ENCODE measurements at regions of chr12 and their contacts with region 1.

Region 1: GRCh38 chr12:50016501-50017475 is 8.5 kb downstream of the RACGAP1 start:
- DNase-seq: peak; percentile 68
- H3K4me3 ChIP-seq: no peak overlapping the region
- H3K27me3 ChIP-seq: no peaks in the 10 kb centered on the region
- CTCF ChIP-seq: no peak

Region 2: DNA sequence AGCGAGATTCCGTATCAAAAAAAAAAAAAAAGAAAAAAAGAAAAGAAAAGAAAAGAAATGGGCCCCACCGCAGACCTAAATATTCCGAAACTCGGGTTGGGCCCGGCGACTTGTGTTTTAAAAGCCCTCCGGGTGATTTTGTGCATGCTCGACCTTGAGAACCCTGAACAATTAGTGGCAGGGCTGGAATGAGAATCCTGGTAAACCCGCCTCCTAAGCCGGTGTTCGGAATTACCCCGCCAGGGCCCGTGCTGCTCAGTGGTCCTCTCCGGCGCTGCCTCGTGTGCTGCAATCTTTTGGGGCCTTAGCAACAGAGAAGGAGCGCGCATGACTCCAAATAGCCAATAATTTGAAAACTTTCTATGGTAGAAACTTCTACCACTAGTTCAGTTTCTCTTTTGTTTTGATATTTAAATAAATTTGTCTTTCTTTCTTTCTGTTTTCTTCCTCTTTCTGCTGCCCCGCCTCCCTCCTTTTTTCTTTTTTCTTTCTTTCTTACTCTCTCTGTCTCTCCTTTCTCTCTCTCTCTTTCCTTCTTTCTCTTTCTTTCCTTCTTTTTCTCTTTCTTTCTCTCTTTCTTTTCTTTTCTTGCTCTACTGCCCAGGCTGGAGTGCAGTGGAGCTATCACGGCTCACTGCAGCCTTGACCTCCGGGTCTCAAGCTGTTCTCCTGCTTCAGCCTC is 1375.9 kb after region 1 on chr12:
- CTCF ChIA-PET with region 1: no interaction called
- POLR2A ChIA-PET with region 1: interaction called, 10 read pairs
- DNase-seq: no peak
- H3K4me3 ChIP-seq: no peak overlapping the region
- H3K27me3 ChIP-seq: no peaks in the 10 kb centered on the region
- CTCF ChIP-seq: 0 out of 2 replicates have a peak, but pooled peaks have one; percentile 4

Measured in BJ (cell line).